GM10248 (cell line): ENCODE measurements at regions of chr17 and their contacts with region 1.

Region 1: DNA sequence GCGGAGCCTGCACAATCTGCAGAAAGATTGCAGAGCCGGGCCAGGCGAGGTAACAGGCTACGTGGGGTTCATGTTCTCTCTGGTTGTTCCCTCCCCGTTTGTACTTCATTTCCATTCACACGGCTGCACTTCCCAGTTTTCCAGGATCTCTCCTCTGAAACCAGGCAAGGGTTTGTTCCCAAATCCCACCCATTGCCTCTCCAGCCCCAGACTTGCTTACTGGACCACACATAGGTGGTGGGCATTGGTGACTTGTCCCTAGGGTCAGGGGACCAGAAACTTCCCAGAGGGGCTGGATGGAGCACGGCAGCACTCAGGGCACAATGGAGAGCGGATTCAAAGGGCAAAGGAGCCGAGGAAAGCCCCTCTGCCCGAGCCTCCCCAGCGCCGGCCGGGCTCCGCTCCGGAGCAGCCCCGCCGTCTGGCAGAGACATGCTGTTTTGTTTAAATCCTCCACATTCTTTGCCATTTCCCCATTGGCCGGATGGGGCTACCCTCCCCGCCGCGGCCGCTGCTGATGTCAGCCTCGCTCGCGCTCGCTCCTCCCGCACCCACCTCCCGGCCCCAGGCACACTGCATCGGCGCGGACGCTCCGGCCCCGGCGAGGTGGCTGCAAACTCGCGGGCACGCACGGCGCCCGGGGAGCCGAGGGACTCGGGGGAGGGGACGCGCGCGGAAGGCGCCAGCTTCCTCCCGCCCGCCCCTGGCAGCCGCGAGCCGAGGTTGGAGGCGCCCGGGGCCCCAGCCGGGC is at the start of gene PITPNC1:
- DNase-seq: peak; percentile 86
- CTCF ChIP-seq: no peak

Region 2: DNA sequence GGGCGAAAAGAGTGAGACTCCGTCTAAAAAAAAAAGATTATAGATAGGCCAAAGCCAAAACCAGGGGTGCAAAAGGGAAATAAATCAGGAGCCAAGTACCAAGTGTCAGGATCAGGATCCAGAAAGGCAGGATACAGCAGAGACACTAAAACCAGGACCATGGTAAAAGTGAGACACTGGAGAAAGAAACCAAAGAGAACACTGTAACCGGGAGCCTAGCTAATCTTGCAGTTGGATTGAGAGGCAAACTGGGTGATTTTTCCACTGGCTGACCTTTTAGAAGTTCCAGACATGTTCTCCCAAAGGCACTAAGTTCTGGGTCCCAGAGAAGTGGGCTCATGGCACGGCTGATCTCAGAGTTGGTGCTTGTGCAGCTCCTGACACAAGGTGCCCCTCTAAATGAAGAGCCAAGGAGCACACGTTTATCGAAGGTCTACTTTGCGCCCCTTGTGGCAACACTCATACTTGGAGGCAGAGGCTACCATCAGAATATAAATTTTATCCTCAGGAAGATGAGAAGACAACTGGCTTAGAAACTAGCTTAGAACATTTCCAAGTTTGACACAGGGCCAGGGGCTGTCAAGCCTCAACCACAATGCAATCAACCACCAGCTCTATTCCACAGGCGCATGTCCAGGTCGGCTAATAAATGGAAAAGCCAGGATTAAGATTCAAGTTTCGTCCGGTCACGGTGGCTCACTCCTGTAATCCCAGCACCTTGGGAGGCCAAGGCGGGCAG is 104.4 kb before region 1 on chr17:
- CTCF ChIA-PET with region 1: no interaction called
- POLR2A ChIA-PET with region 1: no interaction called
- DNase-seq: no peak
- CTCF ChIP-seq: peak; percentile 30

Region 3: GRCh38 chr17:67336859-67337258 is 40.1 kb before region 1 on chr17:
- CTCF ChIA-PET with region 1: no interaction called
- POLR2A ChIA-PET with region 1: no interaction called
- DNase-seq: no peak
- CTCF ChIP-seq: no peak

Region 4: DNA sequence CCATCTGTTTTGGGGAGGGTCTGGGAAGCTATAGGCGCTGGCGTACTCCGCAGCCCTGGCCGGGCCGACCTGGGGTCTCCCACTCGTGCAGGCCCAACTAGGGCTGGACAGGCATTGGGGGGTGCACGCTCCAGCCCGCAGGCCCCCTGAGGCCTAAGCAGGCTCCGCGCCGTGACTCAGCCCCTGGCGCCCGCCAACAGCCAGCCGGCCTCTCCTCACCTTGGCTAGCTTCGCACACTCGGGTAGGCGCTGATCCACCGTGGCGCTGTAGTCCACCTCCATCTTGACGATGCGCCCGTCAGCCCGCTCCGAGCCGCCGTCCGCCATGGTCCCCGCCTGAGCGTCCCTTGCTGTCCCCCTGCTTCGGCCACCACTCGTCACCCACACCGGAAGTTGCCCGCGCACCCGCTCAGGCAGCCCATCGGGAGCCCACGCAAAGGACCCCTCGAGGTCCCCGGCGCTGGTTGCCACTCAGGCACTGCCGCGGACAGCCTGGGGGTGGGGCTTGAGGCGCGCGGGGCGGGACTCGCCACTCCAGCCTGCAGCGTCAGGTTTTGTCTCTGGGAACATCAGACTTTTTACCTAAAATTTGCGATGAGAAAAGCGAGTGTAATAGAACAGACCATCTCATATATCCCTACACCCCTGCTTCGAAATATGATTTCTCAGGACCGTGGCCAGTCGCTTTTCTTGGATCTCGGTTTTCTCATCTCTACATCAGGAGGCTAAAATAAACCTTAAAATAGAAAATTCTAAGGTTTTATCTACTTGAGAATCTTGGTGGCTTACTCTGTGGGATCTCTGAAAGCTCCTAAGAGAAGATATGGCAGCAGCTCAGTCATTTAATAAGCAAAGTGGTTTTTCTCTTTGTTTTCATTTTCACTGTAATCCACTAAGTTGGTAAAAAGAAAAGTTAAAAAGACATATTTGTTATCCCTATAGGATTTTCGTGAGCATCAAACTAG is 10.4 kb before region 1 on chr17 and contains the start of gene PSMD12:
- CTCF ChIA-PET with region 1: interaction called, 28 read pairs
- POLR2A ChIA-PET with region 1: interaction called, 5 read pairs
- DNase-seq: peak; percentile 95
- CTCF ChIP-seq: no peak

Region 5: DNA sequence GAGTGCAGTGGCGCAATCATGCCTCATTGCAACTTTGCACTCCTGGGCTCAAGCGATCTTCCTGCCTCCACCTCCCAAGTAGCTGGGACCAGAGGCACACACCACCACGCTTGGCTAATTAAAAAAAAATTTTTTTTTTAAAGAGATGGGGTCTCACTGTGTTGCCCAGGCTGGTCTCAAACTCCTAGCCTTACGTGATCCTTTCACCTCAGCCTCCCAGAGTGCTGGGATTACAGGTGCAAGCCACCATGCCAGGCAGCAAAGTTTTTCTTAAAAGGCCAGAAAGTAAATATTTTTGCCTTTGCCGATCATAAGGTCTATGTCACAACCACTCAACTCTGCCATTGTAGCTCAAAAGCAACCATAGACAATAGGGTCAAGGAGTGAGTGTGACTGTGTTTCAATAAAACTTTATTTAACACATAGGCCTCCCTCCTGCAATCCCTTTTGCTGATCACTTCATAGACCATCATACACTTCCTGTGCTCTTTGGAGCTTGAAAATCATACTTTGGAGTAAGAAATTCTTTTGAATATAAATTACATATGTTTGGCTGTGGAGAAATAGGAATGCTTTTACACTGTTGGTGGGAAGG is 48.8 kb after region 1 on chr17:
- CTCF ChIA-PET with region 1: no interaction called
- POLR2A ChIA-PET with region 1: no interaction called
- DNase-seq: no peak
- CTCF ChIP-seq: no peak

Region 6: DNA sequence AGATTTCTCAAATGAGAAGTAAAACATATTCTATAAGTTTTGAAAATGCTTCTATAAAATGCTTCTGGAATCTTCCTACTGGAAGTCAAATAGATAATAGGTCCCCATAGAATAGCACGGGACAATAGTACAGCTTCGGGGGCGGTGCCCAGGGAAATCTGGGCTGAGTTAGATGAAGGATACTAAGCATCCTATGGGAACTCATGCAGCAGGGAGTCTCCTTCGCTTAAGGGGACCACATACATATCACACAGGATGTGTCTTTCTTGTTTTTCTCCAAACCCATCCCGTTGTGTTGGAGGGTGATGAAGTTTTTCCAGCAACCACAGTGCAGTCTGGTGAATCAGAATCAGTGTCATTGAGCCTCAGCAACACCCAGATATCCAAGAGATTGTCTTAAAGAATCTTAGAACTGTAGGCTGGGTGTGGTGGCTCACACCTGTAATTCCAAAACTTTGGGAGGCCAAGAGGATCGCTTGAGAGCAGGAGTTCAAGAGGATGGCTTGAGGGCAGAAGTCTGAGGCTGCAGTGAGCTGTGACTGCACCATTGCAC is 84.4 kb after region 1 on chr17:
- CTCF ChIA-PET with region 1: interaction called, 13 read pairs
- POLR2A ChIA-PET with region 1: interaction called, 4 read pairs
- DNase-seq: no peak
- CTCF ChIP-seq: no peak

Region 7: GRCh38 chr17:67493812-67494211 is 116.9 kb after region 1 on chr17:
- CTCF ChIA-PET with region 1: no interaction called
- POLR2A ChIA-PET with region 1: no interaction called
- DNase-seq: no peak
- CTCF ChIP-seq: no peak

Region 8: DNA sequence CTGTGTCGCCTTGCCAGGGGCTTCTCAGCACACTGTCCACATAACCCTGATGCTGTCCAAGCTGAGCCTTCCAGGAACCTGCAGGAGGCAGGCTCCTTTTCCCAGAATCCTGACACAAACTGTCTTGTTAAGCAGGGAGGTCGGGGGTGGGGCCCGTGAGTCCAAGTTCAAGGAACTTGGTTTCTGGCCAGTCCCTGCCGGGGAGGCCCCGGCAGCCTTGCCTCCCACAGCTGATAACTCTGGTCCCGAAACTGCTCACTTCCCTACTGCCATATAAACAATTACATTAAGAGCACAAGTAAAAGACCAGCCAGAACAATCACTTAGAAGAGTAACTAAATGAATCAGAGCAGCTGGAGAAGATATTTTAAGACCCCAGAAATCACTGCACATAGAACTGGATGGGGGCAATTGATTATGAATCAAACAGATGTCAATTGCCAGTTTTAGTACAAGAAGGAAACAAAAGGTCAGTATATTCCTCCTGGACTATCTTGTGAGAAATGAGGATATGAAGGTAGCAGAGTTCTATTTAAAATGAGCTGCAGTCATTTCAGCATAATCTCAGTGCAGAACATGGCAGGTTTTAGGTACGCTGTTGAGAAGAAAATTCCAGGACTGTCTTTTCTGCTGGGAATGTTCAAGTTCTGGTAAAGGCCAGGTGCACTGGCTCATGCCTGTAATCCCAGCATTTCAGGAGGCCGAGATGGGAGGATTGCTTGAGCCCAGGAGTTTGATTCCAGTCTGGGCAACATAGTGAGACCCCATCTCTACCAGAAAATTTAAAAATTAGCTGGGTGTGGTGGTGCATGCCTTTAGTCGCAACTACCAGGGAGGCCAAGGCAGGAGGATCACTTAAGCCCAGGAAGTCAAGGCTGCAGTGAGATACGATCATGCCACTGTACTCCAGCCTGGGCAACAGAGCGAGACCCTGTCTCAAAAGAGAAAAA is 169.9 kb after region 1 on chr17:
- CTCF ChIA-PET with region 1: interaction called, 10 read pairs
- POLR2A ChIA-PET with region 1: no interaction called
- DNase-seq: peak; percentile 83
- CTCF ChIP-seq: no peak

Region 9: GRCh38 chr17:67584991-67585602 is 208.2 kb after region 1 on chr17:
- CTCF ChIA-PET with region 1: interaction called, 16 read pairs
- POLR2A ChIA-PET with region 1: no interaction called
- DNase-seq: no peak
- CTCF ChIP-seq: no peak

Region 10: GRCh38 chr17:67619555-67619954 is 242.6 kb after region 1 on chr17:
- CTCF ChIA-PET with region 1: interaction called, 10 read pairs
- POLR2A ChIA-PET with region 1: no interaction called
- DNase-seq: no peak
- CTCF ChIP-seq: no peak

Region 11: GRCh38 chr17:67689534-67690177 is 312.7 kb after region 1 on chr17:
- CTCF ChIA-PET with region 1: interaction called, 63 read pairs
- POLR2A ChIA-PET with region 1: no interaction called
- DNase-seq: peak; percentile 80
- CTCF ChIP-seq: peak; percentile 70